ENCODE measurements at regions of chrX and their contacts with region 1.

Region 1: DNA sequence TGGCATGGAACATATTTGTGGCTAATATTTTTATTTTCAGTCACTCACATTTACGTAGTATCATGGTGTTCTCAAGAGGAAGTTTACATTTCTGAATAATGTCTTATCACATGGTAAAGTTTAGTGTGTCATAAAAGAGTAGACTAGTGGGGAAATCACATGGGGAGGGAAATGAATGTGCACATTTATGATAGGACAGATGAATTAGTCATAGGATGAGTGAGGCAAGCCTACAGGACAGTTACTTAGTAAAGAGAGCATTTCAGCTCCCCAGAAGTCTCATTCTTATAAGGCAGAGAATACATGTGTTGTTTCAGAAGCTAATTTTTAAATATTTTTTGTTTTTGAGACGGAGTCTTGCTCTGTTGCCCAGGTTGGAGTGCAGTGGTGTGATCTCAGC is 6.2 kb downstream of the GK start:
- DNase-seq: peak; percentile 59
- H3K4me3 Mint-ChIP-seq: peak overlapping the region; percentile 49
- H3K27ac Mint-ChIP-seq: peak overlapping the region; percentile 88
- H3K4me1 Mint-ChIP-seq: peaks cover 35% of the 10 kb centered on the region
- H3K27me3 Mint-ChIP-seq: no peaks in the 10 kb centered on the region

Region 2: DNA sequence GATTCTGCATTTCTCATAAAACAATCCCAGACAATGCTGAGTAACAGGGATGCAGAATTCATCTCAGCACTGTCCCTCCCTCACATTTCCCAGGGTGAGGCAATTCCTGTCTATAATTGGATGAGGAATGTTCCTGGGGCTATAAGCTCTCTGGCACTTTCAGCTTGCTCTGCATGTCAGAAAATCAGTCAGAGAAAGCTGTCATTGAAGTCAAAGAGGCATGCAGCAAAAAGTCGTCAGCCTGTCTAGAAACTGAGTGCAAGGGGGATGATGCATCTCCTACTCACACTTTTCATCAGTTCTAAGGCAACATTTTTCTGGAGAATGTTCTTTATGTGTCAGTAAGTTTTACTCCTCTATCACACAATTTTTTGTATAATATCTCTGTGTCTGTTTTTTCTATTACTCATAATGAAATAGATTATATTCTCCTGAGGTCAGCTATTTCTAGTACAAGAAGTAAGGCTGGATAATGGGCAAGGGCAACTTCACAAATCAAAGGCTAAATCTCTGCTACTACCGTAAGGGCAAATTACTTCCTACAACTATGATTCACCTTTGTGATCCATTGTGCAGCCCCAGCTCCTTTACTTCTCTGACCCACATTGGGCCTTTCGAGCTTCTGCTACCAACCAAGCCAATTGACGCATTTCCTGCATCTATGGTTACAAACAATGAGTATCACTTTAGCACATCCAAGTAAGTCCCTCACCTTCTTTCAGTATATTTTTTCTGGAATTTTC is 137.8 kb before region 1 on chrX:
- intact Hi-C with region 1: no loop called
- DNase-seq: no peak
- H3K4me3 Mint-ChIP-seq: no peak overlapping the region
- H3K27ac Mint-ChIP-seq: no peak overlapping the region
- H3K4me1 Mint-ChIP-seq: no peaks in the 10 kb centered on the region
- H3K27me3 Mint-ChIP-seq: no peaks in the 10 kb centered on the region

Region 3: GRCh38 chrX:30577362-30577991 is 81.9 kb before region 1 on chrX and contains the start of gene TASL:
- intact Hi-C with region 1: loop called (anchors 2 kb)
- DNase-seq: peak; percentile 83
- H3K4me3 Mint-ChIP-seq: peak within 1 kb of the TSS; percentile 95
- H3K27ac Mint-ChIP-seq: peak within 1 kb of the TSS; percentile 98
- H3K4me1 Mint-ChIP-seq: peaks cover 13% of the 10 kb centered on the region
- H3K27me3 Mint-ChIP-seq: no peaks in the 10 kb centered on the region
- total RNA-seq, gene TASL: 4.2 and 5.1 TPM in 2 replicates

Region 4: GRCh38 chrX:30643313-30643821 is 16.1 kb before region 1 on chrX:
- intact Hi-C with region 1: loop called (anchors 1 kb)
- DNase-seq: peak; percentile 65
- H3K4me3 Mint-ChIP-seq: peak overlapping the region; percentile 9
- H3K27ac Mint-ChIP-seq: peak overlapping the region; percentile 91
- H3K4me1 Mint-ChIP-seq: peaks cover 23% of the 10 kb centered on the region
- H3K27me3 Mint-ChIP-seq: no peaks in the 10 kb centered on the region

Region 5: GRCh38 chrX:32024072-32024471 is 1364.7 kb after region 1 on chrX:
- intact Hi-C with region 1: no loop called
- DNase-seq: no peak
- H3K4me3 Mint-ChIP-seq: no peak overlapping the region
- H3K27ac Mint-ChIP-seq: no peak overlapping the region
- H3K4me1 Mint-ChIP-seq: no peaks in the 10 kb centered on the region
- H3K27me3 Mint-ChIP-seq: no peaks in the 10 kb centered on the region

Measured in activated CD4-positive, alpha-beta T cell treated with anti-CD3 and anti-CD28 coated beads, Interleukin-2, amount 10 ng/mL, durations not matched to agents 24 days and 14 days (primary cell).